Gastrocnemius medialis (tissue), 4 donors: ENCODE measurements at regions of chr11 and their contacts with region 1.

Region 1: DNA sequence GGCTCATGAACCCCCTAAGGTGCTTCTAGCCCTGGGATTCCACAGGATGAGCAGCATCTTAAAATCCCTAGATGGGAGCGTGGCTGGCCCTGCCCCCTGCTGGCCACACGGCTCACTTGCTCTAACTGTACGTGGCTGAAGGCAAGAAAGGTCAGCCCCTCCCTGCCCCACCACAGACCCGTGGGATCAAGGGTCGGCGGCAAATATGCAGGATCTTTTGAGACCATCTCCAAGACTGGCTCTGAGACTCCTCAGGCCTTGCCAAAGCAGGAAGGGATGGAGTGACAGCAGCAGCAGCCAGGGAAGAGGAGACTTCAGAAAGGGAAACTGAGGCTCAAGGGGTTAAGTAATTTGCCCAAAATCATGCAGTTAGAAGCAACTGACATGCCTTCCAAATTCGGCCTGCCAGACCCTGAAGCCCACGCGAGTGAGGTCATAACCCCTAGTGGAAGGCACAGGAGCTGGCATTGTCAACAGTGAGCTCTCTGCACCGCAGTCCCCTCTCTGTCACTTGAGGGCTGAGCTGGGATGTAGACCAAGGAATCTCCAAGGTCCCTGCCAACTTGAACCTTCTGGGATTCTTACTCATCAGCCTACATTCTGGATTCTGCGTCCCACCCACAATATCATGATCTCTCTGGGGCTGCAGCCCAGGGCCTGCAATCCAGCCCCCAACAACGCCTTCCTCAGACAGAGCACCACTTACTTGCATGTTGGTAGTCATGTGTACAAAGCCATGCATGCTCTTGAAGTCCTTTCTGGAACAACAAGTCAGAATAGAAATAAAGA is 31.4 kb downstream of the CREB3L1 start:
- DNase-seq: peak; percentile 43 to 66
- ATAC-seq: peak; percentile 80 to 81
- H3K4me3 ChIP-seq: no peak overlapping the region
- H3K27ac ChIP-seq: no peak overlapping the region
- H3K4me1 ChIP-seq: no peaks in the 10 kb centered on the region
- H3K27me3 ChIP-seq: no peaks in the 10 kb centered on the region
- CTCF ChIP-seq: peak; percentile 85 to 92 (median 90)
- POLR2A ChIP-seq: no peak

Region 2: GRCh38 chr11:45964911-45965389 is 343.9 kb before region 1 on chr11:
- in situ Hi-C with region 1: loop called in 1 of 4 experiments (anchors 25 kb)
- intact Hi-C with region 1: loop called (anchors 10 kb)
- DNase-seq: peak in 1 of 2 donors; percentile 52
- ATAC-seq: peak; percentile 90 to 92
- H3K4me3 ChIP-seq: no peak overlapping the region
- H3K27ac ChIP-seq: peak overlapping the region in 1 of 4 donors; percentile 19
- H3K4me1 ChIP-seq: peaks cover 0 to 12% of the 10 kb centered on the region in 2 donors
- H3K27me3 ChIP-seq: no peaks in the 10 kb centered on the region
- CTCF ChIP-seq: peak; percentile 74 to 87 (median 82)
- POLR2A ChIP-seq: no peak

Region 3: DNA sequence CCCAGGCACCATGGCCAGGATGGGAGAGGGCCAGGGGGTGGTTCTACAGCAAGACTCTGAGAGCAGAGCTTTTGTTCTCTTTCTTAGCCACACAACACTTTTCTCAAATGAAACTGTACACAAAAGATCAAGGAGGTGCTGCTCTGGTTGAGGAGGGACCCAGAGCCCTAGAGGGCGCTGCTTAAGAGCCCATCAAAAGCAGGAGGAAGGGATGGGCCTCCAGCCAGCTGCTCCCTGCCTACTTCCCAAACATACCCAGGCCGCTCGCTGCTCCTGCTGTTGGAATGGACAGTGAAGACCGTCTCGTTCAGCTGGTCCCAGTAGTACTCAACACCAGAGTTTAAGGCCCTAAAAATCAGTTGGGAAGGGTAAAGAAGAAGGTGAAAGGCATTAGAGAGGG is 101.2 kb after region 1 on chr11:
- in situ Hi-C with region 1: no loop called
- intact Hi-C with region 1: no loop called
- DNase-seq: no peak
- ATAC-seq: no peak
- H3K4me3 ChIP-seq: no peak overlapping the region
- H3K27ac ChIP-seq: no peak overlapping the region
- H3K4me1 ChIP-seq: peaks cover 0 to 3% of the 10 kb centered on the region in 2 donors
- H3K27me3 ChIP-seq: no peaks in the 10 kb centered on the region
- CTCF ChIP-seq: no peak
- POLR2A ChIP-seq: no peak